Esophagus squamous epithelium (tissue), 5 donors: ENCODE measurements at regions of chr9 and their contacts with region 1.

Region 1: DNA sequence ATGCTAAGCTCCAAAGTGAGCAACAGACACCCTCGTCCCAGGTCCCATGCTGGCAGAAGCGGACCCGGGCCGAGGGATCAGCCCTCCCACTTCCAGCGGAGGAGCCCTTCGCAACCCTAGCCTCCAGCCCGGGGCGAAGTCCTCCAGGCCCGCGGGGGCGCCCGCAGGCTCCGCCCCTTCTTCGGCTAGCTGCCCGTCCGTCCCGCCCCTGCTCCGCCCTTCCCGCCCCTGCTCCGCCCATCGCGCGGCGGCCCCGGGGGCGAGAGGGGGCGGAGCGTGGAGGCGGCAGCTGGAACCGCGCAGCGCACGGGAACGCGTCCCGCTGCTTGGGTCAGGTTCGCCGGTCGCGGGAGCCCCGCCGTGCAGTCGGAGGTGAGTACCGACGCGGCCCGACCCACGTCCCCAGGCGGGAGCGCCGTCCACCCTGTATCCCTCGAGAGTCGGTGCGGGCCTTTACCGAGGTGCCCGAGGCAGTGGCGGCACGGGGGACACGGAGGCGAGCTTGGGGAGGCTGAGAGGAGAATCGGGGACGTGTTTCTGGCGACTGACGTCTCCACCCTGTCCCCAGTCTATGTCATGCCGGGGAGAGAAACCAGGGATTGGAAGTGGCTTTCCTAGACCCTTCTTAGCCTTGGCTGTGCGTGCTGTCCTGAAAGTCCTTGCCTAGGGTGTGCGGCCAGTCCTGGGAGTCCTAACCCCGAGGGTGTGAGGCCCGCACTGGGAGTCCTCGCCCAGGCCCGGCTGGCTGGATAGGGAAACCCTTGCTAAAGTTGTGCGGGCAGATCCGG is at the start of gene ACO1:
- DNase-seq: peak; percentile 25
- H3K4me3 ChIP-seq: peak within 1 kb of the TSS; percentile 45 to 96 (median 86)
- H3K27ac ChIP-seq: peak within 1 kb of the TSS; percentile 65 to 93 (median 90)
- H3K4me1 ChIP-seq: peaks cover 11 to 35% (median 16%) of the 10 kb centered on the region in 3 donors
- H3K27me3 ChIP-seq: peaks cover 0 to 3% (median 0%) of the 10 kb centered on the region in 4 donors
- CTCF ChIP-seq: peak in 3 of 6 experiments; percentile 5 to 44 (median 12)
- POLR2A ChIP-seq: peak in 3 of 4 donors; percentile 37 to 78 (median 73)
- total RNA-seq, gene ACO1: 10.7 to 25.7 (median 21.5) TPM

Region 2: GRCh38 chr9:31983895-31984294 is 400.7 kb before region 1 on chr9:
- intact Hi-C with region 1: no loop called
- DNase-seq: no peak
- H3K4me3 ChIP-seq: no peak overlapping the region
- H3K27ac ChIP-seq: no peak overlapping the region
- H3K4me1 ChIP-seq: no peaks in the 10 kb centered on the region
- H3K27me3 ChIP-seq: no peaks in the 10 kb centered on the region
- CTCF ChIP-seq: no peak
- POLR2A ChIP-seq: no peak

Region 3: GRCh38 chr9:32326146-32326545 is 58.4 kb before region 1 on chr9:
- intact Hi-C with region 1: no loop called
- DNase-seq: no peak
- H3K4me3 ChIP-seq: no peak overlapping the region
- H3K27ac ChIP-seq: no peak overlapping the region
- H3K4me1 ChIP-seq: no peaks in the 10 kb centered on the region
- H3K27me3 ChIP-seq: no peaks in the 10 kb centered on the region
- CTCF ChIP-seq: no peak
- POLR2A ChIP-seq: no peak

Region 4: DNA sequence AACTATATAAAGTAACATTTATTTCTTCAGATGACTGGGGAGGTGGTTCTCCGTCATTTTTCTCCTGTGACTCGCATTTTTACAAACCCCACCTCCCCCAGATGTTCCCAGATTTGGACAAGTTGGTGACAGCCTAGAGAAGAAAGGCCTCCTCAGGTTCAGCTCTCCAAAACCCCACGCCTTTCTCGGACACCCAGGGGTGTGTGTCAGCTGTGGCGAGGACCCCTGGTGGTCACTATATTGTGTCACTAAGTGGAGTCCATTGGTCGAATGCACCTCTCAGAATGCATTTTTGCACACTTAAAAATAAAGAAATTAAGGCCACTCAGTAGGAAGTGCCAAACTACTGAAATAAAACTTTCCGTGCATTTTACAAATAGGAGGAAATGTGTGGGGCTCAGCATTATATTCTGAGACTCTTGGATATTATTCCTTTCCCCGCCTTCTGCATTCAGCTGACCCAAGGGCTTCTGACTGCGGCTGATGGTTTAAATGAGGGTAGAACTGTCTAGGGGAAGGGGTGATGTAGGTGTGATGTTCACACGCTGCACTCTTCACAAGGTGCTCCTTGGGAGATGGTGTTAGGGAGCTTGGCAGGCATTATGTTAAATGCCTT is 47.5 kb after region 1 on chr9:
- intact Hi-C with region 1: no loop called
- DNase-seq: no peak
- H3K4me3 ChIP-seq: no peak overlapping the region
- H3K27ac ChIP-seq: no peak overlapping the region
- H3K4me1 ChIP-seq: no peaks in the 10 kb centered on the region
- H3K27me3 ChIP-seq: no peaks in the 10 kb centered on the region
- CTCF ChIP-seq: peak in 5 of 6 experiments; percentile 20 to 41 (median 39)
- POLR2A ChIP-seq: no peak

Region 5: DNA sequence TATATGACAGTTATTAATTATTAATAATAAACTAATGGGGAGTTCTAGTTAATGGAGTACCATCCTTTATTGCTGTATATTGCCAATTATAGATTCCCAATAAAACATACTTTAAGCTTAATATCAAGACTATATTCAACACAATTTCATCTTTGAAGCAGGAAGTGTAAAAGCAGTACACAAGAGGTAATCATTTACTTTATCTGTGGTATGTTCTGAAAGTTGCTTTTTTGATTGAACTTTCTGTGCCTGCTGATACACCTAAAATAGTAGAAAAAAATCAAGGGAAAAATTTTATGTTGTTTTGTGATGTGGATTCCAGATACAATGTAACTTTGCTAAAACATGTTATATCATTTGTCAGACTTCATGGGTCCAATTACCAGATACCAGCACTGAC is 57.9 kb after region 1 on chr9:
- intact Hi-C with region 1: no loop called
- DNase-seq: no peak
- H3K4me3 ChIP-seq: no peak overlapping the region
- H3K27ac ChIP-seq: no peak overlapping the region
- H3K4me1 ChIP-seq: no peaks in the 10 kb centered on the region
- H3K27me3 ChIP-seq: no peaks in the 10 kb centered on the region
- CTCF ChIP-seq: no peak
- POLR2A ChIP-seq: no peak

Region 6: GRCh38 chr9:32526041-32526706 is 141.6 kb after region 1 on chr9 and contains the start of gene RIGI:
- intact Hi-C with region 1: loop called (anchors 5 kb)
- DNase-seq: peak; percentile 16
- H3K4me3 ChIP-seq: peak within 1 kb of the TSS; percentile 58 to 88 (median 74)
- H3K27ac ChIP-seq: peak within 1 kb of the TSS; percentile 85 to 94 (median 92)
- H3K4me1 ChIP-seq: peaks cover 9 to 33% (median 16%) of the 10 kb centered on the region in 3 donors
- H3K27me3 ChIP-seq: no peaks in the 10 kb centered on the region
- CTCF ChIP-seq: peak; percentile 9 to 67 (median 46)
- POLR2A ChIP-seq: peak in 3 of 4 donors; percentile 36 to 49 (median 41)
- total RNA-seq, gene RIGI: 6.5 to 10.4 (median 8.4) TPM

Region 7: DNA sequence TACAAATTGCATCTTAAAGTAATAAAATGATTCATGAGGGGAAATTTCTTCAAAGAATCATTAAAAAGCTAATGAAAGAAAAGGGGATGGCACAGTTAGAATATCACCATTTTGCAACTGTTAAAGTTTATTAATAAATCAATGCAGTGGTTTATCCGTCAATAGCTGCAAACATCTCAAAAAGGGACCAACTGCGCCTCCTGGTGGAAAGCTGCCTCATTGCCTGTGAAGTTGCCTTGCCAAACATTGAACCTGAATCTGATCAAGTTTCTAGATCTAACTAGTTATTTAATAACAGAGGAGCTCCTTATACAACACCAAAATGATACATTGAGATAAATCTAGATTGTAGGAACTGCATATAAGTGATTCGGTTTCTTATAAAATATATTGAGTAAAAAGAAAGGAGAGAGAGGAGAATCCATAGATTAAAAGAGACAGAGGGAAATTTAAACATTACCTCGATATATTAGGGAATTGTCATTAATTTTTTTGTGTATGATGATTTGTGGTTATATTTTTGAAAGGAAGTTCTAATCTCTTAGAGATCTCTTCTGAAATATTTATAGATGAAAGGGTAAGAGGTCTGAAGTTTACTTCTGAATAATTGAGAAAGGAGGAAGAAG is 195.3 kb after region 1 on chr9:
- intact Hi-C with region 1: loop called (anchors 5 kb)
- DNase-seq: no peak
- H3K4me3 ChIP-seq: no peak overlapping the region
- H3K27ac ChIP-seq: no peak overlapping the region
- H3K4me1 ChIP-seq: peaks cover 0 to 8% (median 0%) of the 10 kb centered on the region in 3 donors
- H3K27me3 ChIP-seq: peaks cover 0 to 14% (median 0%) of the 10 kb centered on the region in 4 donors
- CTCF ChIP-seq: peak; percentile 75 to 94 (median 84)
- POLR2A ChIP-seq: no peak